ENCODE measurements at regions of chr11 and their contacts with region 1.

Region 1: GRCh38 chr11:6505577-6506240 is 8.6 kb downstream of the DNHD1 start:
- DNase-seq: peak; percentile 43 to 54
- ATAC-seq: peak; percentile 72 to 87; a peak in 5 of 6 replicates
- H3K4me3 ChIP-seq: no peak overlapping the region
- H3K27ac ChIP-seq: no peak overlapping the region
- H3K4me1 ChIP-seq: no peaks in the 10 kb centered on the region
- CTCF ChIP-seq: peak; percentile 85
- EP300 ChIP-seq: no peak
- POLR2A ChIP-seq: no peak
- RAD21 ChIP-seq: peak; percentile 55 to 60

Region 2: GRCh38 chr11:6473481-6474422 is 32.0 kb before region 1 on chr11 and contains the start of gene TRIM3:
- CTCF ChIA-PET with region 1: interaction called, 15 read pairs
- POLR2A ChIA-PET with region 1: no interaction called
- DNase-seq: peak; percentile 82 to 90
- ATAC-seq: peak; percentile 77 to 89
- H3K4me3 ChIP-seq: peak within 1 kb of the TSS; percentile 92
- H3K27ac ChIP-seq: peak within 1 kb of the TSS; percentile 91 to 92
- H3K4me1 ChIP-seq: peaks cover 31% of the 10 kb centered on the region
- CTCF ChIP-seq: peak; percentile 45
- EP300 ChIP-seq: no peak
- POLR2A ChIP-seq: peak; percentile 46; the same call in 1 of the 2 replicates
- RAD21 ChIP-seq: no peak
- polyA plus RNA-seq, gene TRIM3: 10.0 and 11.3 TPM in 2 replicates

Region 3: DNA sequence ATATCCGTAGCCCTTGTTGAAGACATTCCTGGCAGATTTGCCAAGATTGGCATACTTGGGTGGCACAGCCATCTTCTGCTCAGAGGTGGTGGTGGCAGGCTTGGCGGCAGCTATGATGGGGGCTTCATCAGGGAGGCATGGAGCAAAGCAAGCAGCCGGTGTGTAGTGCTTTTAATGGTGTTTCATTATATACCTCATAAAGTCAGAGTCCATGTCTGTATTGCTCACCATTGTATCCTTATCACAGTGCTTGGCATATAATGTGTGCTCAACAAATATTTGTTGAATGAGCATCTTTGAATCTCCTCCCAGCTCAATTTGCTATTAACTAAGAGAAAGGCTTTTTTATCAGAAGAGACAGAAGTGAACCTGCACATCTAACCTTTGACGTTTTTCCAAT is 16.4 kb before region 1 on chr11:
- CTCF ChIA-PET with region 1: interaction called, 16 read pairs
- POLR2A ChIA-PET with region 1: no interaction called
- DNase-seq: no peak
- ATAC-seq: peak in 1 of 2 experiments; percentile 61; a peak in 3 of 6 replicates
- H3K4me3 ChIP-seq: no peak overlapping the region
- H3K27ac ChIP-seq: no peak overlapping the region
- H3K4me1 ChIP-seq: peaks cover 9% of the 10 kb centered on the region; the same call in 2 of the 3 replicates
- CTCF ChIP-seq: no peak
- EP300 ChIP-seq: no peak
- POLR2A ChIP-seq: no peak
- RAD21 ChIP-seq: no peak

Region 4: DNA sequence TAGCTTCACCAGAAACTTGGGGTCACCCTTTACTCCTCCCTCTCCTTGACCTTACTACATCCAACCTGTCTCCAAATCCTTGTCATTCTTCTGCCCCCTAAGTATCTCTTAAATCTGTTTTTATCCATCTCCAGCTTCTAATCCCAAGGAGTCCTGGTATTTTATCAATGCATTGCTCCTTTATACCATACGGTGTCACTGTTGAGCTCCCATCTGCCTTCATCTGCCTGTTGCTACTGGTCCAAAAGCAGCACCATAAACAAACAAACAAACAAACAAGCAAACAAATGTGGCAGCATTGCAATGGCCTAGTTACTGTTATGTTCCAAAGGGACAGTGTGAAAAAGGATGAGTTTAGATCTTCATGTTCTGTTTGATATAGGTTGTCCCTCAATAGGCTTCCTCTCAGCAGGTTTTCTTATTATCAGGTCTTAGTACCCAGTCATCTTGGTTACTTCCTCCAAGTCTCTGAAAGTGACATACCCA is 25.6 kb after region 1 on chr11:
- CTCF ChIA-PET with region 1: interaction called, 16 read pairs
- POLR2A ChIA-PET with region 1: no interaction called
- DNase-seq: peak; percentile 57 to 79
- ATAC-seq: peak; percentile 88 to 93
- H3K4me3 ChIP-seq: no peak overlapping the region
- H3K27ac ChIP-seq: no peak overlapping the region
- H3K4me1 ChIP-seq: no peaks in the 10 kb centered on the region
- CTCF ChIP-seq: peak; percentile 76
- EP300 ChIP-seq: no peak
- POLR2A ChIP-seq: no peak
- RAD21 ChIP-seq: peak; percentile 69 to 76

Measured in A549 (cell line).